ENCODE measurements at regions of chr3 and their contacts with region 1.

Region 1: DNA sequence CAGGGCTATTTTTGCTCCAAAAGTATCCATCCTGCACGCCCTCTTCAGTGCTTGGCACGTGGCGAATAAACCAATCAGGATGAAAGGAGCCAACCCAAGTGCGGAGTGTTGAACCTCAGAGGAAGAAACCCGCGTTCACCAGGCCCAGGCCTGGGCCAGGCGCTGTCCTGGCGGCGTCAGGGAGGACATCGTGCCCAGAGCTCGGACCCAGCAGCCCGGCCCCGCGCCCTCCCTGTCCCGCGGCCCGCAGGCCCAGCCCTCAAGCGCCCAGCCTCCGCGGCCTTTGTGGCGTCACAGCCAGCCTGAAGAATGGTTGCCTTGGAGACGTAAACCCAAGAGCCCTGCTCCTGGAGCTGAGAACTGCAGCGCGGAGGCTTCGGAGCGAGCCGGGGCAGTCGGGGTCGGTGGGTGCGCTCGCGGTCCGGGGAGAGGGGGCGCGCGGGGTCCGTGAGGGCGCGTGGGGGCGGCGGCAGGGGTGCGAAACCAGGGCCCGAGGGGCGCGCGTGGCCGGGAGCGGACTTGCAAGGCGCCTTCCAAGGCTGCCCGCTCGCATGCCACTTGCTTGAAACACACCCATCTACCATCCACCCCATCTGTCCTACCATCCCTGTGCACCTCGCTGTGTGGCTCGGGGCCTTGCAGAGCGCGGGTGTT is at the start of gene CFAP100:
- DNase-seq: peak in 3 of 4 donors; percentile 43 to 57 (median 45)
- ATAC-seq: peak; percentile 58
- H3K4me3 ChIP-seq: no peak within 1 kb of the TSS
- H3K27ac ChIP-seq: no peak within 1 kb of the TSS
- H3K4me1 ChIP-seq: peaks cover 8% of the 10 kb centered on the region
- H3K27me3 ChIP-seq: no peaks in the 10 kb centered on the region
- CTCF ChIP-seq: no peak
- POLR2A ChIP-seq: no peak
- total RNA-seq, gene CFAP100: not detected

Region 2: DNA sequence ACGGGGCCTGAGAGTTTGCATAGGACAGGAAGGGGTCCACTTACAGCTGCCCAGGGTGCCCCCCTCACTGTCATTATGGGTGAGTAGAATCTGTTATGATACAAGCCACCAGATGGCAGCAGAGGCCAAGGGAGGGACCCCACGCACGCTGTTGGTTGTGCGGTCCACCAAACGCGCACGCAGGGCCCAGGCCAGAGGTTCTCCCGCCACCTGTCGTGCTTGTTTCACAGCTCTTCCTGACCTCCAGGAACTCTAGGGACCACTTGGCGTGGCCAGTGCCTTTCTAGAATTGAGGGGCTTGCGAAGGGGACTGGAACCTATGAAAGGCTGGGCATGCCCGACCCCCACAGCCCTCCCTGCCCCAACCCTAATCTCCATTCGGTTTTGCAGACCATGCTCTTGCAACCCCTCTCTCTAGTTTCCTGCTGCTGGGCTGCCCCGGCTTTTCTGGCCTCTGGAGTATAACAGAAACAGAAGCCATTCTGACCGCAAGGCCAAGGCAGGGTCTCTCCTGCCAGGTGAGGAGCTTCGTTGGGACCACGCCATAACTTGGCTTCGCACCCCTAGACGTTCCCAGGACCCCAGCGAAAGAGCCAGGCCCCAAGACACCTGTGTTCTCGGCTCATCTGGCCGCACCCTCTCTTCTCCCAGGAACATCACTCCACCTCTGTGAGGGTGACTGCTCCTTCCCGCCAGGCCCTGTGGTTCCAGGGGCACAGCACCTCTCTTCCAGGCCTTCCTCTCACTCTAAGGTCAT is 260.3 kb before region 1 on chr3:
- intact Hi-C with region 1: loop called (anchors 5 kb)
- DNase-seq: peak; percentile 69 to 73 (median 71)
- ATAC-seq: peak; percentile 72
- H3K4me3 ChIP-seq: no peak overlapping the region
- H3K27ac ChIP-seq: no peak overlapping the region
- H3K4me1 ChIP-seq: peaks cover 11% of the 10 kb centered on the region
- H3K27me3 ChIP-seq: no peaks in the 10 kb centered on the region
- CTCF ChIP-seq: peak; percentile 53 to 85 (median 78)
- POLR2A ChIP-seq: no peak

Region 3: DNA sequence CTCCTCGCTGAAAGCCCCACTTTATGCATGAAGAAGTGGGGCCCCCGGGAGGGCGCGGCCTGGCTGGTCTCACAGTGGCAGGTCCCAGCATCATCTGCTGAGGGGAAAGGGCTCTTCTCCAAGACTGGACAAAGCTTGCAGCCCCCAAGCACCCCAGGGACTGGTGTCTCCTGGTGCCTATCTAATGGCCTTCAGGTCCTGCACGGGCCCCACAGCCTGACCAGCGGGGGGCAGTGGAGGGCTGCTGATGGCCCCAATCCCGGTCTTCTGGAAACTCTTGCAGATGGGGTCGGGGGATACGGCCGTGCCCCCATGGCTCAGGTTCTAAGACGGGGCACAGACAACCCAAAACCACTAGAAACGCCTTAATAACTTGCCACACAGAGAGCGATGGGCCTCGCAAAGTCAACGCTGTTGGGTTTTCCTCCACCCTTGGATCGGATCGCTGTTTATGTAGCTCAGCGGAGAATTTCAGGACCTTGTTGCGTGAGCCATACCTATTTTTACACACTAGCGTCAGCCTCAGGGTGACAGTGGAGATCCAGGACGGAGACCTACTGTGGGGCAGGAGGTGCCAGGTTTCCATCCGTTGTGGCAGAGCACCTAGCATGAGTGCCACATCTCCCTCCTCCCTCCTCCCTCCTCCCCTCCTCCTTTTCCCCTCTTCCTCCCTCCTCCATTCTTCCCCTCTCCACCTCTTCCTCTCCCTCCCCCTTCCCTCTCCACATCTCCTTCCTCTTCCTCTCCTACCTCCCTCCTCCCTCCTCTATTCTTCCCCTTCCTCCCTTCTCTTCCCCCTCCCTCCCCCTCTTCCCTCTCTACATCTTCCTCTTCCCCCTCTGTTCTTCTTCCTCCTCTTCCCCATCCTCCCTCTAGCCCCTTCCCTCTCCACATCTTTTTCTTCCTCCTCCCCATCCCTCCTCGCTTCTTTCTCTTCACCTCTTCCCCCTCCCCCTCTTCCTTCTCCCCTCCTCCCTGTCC is 135.0 kb before region 1 on chr3:
- intact Hi-C with region 1: loop called (anchors 5 kb)
- DNase-seq: peak; percentile 68 to 83 (median 80)
- ATAC-seq: peak; percentile 87
- H3K4me3 ChIP-seq: no peak overlapping the region
- H3K27ac ChIP-seq: no peak overlapping the region
- H3K4me1 ChIP-seq: peaks cover 6% of the 10 kb centered on the region
- H3K27me3 ChIP-seq: no peaks in the 10 kb centered on the region
- CTCF ChIP-seq: peak; percentile 77 to 95 (median 90)
- POLR2A ChIP-seq: no peak

Region 4: GRCh38 chr3:126731044-126731443 is 336.3 kb after region 1 on chr3:
- intact Hi-C with region 1: no loop called
- DNase-seq: peak in 1 of 4 donors; percentile 27
- ATAC-seq: no peak
- H3K4me3 ChIP-seq: no peak overlapping the region
- H3K27ac ChIP-seq: no peak overlapping the region
- H3K4me1 ChIP-seq: no peaks in the 10 kb centered on the region
- H3K27me3 ChIP-seq: no peaks in the 10 kb centered on the region
- CTCF ChIP-seq: no peak
- POLR2A ChIP-seq: no peak